ENCODE measurements at regions of chr1 and their contacts with region 1.

Region 1: GRCh38 chr1:25430666-25431505 is at the start of gene MACO1:
- DNase-seq: peak; percentile 98 to 99
- ATAC-seq: peak; percentile 88 to 91
- H3K4me3 ChIP-seq: peak within 1 kb of the TSS; percentile 76 to 89 (median 86)
- H3K27ac ChIP-seq: peak within 1 kb of the TSS; percentile 92 to 99 (median 97)
- H3K4me1 ChIP-seq: peaks cover 41 to 42% of the 10 kb centered on the region in 2 donors
- H3K27me3 ChIP-seq: no peaks in the 10 kb centered on the region
- CTCF ChIP-seq: no peak
- POLR2A ChIP-seq: peak; percentile 71 to 80
- total RNA-seq, gene MACO1: 38.8 to 74.6 (median 44.8) TPM

Region 2: DNA sequence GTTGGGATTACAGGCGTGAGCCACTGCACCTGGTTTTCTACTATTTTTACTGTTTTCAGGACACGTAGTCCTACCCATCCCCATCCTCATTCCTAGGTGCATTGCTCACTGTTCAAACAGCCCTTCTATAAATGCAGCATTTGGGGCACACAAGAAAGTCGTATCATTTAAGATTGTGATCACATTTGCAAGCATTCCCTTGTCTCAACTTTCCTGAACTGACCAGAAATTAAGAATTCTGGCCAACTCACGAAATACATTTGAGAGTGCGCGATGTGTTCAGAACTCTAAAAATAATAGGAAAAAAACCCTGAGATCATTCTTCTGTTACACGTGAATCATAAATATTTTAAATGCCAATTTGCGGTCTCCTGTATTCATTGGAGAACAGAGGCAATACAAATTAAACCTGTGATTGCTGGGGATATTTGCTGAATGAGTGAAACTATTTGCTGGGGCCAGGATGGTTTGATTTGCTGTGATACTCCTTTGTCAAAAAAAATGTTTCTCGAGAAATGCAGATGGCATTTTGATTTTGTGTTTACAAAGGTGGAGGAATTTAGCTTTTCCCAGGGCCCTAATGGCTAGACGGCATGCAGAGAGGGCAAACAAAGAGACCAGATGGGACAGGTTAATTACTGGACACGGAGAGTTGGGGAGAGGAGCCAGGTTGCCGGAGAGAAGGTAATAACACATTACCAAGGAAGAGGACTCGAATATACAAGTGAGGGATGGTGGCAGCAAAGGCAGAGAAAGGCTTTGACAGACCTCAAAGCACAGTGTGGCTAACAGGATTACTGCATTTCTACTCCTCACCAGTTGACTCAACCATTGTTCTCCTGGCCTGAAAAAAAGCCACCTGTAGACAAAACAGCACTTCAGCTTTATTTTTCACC is 1055.7 kb before region 1 on chr1:
- in situ Hi-C with region 1: no loop called
- intact Hi-C with region 1: no loop called
- DNase-seq: no peak
- ATAC-seq: no peak
- H3K4me3 ChIP-seq: no peak overlapping the region
- H3K27ac ChIP-seq: no peak overlapping the region
- H3K4me1 ChIP-seq: no peaks in the 10 kb centered on the region
- H3K27me3 ChIP-seq: no peaks in the 10 kb centered on the region
- CTCF ChIP-seq: no peak
- POLR2A ChIP-seq: no peak

Region 3: DNA sequence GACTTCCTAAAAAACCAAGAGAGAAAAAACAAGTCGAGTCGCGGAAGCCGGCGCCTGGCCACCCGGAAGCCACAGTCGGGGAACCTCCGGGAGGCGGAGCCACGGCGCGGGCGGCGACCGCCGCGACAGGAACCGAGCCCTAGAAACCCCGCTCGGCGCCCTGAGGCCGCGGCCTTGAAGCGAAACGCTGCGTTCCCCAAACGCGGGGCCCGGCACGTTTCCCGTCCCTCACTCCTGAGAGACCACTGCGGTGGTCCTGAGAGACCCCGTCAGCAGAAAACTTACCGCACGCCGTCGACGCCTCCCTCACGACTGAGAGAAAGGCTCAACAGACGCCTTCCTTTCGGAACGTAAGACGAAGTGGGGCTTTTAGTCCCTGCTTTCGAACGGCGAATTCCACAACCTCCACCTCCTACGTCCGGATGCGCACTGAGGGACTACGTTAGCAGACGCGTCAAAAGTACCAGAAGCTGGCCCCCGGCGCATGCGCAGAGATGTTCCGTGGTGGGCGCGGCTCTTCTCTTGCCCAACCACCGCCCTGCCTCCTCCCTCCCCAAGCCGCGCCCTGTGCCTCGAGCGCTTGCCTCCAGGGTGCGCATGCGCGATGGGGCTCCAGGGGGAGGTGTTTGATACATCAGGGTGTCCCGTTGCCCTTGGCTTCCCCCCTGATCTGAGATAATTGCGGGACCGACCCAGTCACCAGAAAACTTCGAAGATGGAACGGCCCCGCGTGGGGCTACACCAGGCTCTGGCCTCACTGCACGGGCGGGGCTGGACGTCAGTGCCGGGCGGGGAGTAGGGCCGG is 183.7 kb before region 1 on chr1 and contains the start of gene RSRP1:
- in situ Hi-C with region 1: no loop called
- intact Hi-C with region 1: loop called (anchors 2 kb)
- DNase-seq: peak; percentile 99
- ATAC-seq: peak; percentile 90 to 98
- H3K4me3 ChIP-seq: peak within 1 kb of the TSS; percentile 85 to 97 (median 96)
- H3K27ac ChIP-seq: peak within 1 kb of the TSS; percentile 99 to 100 (median 100)
- H3K4me1 ChIP-seq: peaks cover 26% of the 10 kb centered on the region in 2 donors
- H3K27me3 ChIP-seq: no peaks in the 10 kb centered on the region
- CTCF ChIP-seq: peak in 2 of 5 experiments; percentile 18 to 25
- POLR2A ChIP-seq: peak; percentile 99 to 100
- total RNA-seq, gene RSRP1: 10.3 to 43.0 (median 20.9) TPM

Region 4: GRCh38 chr1:25343872-25344271 is 87.0 kb before region 1 on chr1:
- in situ Hi-C with region 1: no loop called
- intact Hi-C with region 1: loop called (anchors 5 kb)
- DNase-seq: peak in 1 of 2 donors; percentile 26
- ATAC-seq: peak in 1 of 2 donors; percentile 41
- H3K4me3 ChIP-seq: no peak overlapping the region
- H3K27ac ChIP-seq: peak overlapping the region in 1 of 4 donors; percentile 17
- H3K4me1 ChIP-seq: peaks cover 17 to 20% of the 10 kb centered on the region in 2 donors
- H3K27me3 ChIP-seq: no peaks in the 10 kb centered on the region
- CTCF ChIP-seq: no peak
- POLR2A ChIP-seq: no peak

Region 5: GRCh38 chr1:25392841-25393240 is 38.0 kb before region 1 on chr1:
- in situ Hi-C with region 1: no loop called
- intact Hi-C with region 1: no loop called
- DNase-seq: no peak
- ATAC-seq: no peak
- H3K4me3 ChIP-seq: no peak overlapping the region
- H3K27ac ChIP-seq: no peak overlapping the region
- H3K4me1 ChIP-seq: no peaks in the 10 kb centered on the region
- H3K27me3 ChIP-seq: no peaks in the 10 kb centered on the region
- CTCF ChIP-seq: no peak
- POLR2A ChIP-seq: no peak

Region 6: GRCh38 chr1:25458541-25459298 is 27.8 kb after region 1 on chr1:
- in situ Hi-C with region 1: no loop called
- intact Hi-C with region 1: no loop called
- DNase-seq: no peak
- ATAC-seq: peak; percentile 90 to 91
- H3K4me3 ChIP-seq: peak overlapping the region in 1 of 4 donors; percentile 2
- H3K27ac ChIP-seq: peak overlapping the region; percentile 74 to 87 (median 76)
- H3K4me1 ChIP-seq: peaks cover 51 to 59% of the 10 kb centered on the region in 2 donors
- H3K27me3 ChIP-seq: no peaks in the 10 kb centered on the region
- CTCF ChIP-seq: no peak
- POLR2A ChIP-seq: no peak

Region 7: GRCh38 chr1:25476186-25477097 is 45.6 kb after region 1 on chr1:
- in situ Hi-C with region 1: no loop called
- intact Hi-C with region 1: loop called (anchors 2 kb)
- DNase-seq: no peak
- ATAC-seq: peak; percentile 78 to 88
- H3K4me3 ChIP-seq: no peak overlapping the region
- H3K27ac ChIP-seq: peak overlapping the region; percentile 65 to 83 (median 69)
- H3K4me1 ChIP-seq: peaks cover 93 to 98% of the 10 kb centered on the region in 2 donors
- H3K27me3 ChIP-seq: no peaks in the 10 kb centered on the region
- CTCF ChIP-seq: no peak
- POLR2A ChIP-seq: no peak

Region 8: GRCh38 chr1:25543425-25544242 is 112.7 kb after region 1 on chr1 and contains the start of gene LDLRAP1:
- in situ Hi-C with region 1: no loop called
- intact Hi-C with region 1: loop called (anchors 5 kb)
- DNase-seq: peak; percentile 48 to 68
- ATAC-seq: peak; percentile 88
- H3K4me3 ChIP-seq: peak within 1 kb of the TSS; percentile 76 to 95 (median 89)
- H3K27ac ChIP-seq: peak within 1 kb of the TSS; percentile 82 to 97 (median 93)
- H3K4me1 ChIP-seq: peaks cover 25 to 29% of the 10 kb centered on the region in 2 donors
- H3K27me3 ChIP-seq: no peaks in the 10 kb centered on the region
- CTCF ChIP-seq: no peak
- POLR2A ChIP-seq: peak; percentile 98 to 99
- total RNA-seq, gene LDLRAP1: 10.0 to 17.9 (median 14.2) TPM

Region 9: GRCh38 chr1:25695090-25695770 is 264.3 kb after region 1 on chr1:
- in situ Hi-C with region 1: no loop called
- intact Hi-C with region 1: no loop called
- DNase-seq: peak; percentile 75 to 85
- ATAC-seq: peak; percentile 75 to 77
- H3K4me3 ChIP-seq: no peak overlapping the region
- H3K27ac ChIP-seq: peak overlapping the region; percentile 48 to 76 (median 70)
- H3K4me1 ChIP-seq: peaks cover 40 to 44% of the 10 kb centered on the region in 2 donors
- H3K27me3 ChIP-seq: no peaks in the 10 kb centered on the region
- CTCF ChIP-seq: peak in 1 of 5 experiments; percentile 20
- POLR2A ChIP-seq: no peak

Measured in gastrocnemius medialis (tissue), 4 donors.